ENCODE measurements at regions of chr10 and their contacts with region 1.

Region 1: GRCh38 chr10:26890956-26891355 is 30.2 kb upstream of the ABI1 start:
- DNase-seq: peak; percentile 66
- H3K4me3 Mint-ChIP-seq: no peak overlapping the region
- H3K27ac Mint-ChIP-seq: no peak overlapping the region
- H3K4me1 Mint-ChIP-seq: no peaks in the 10 kb centered on the region
- H3K27me3 Mint-ChIP-seq: peaks cover 6% of the 10 kb centered on the region

Region 2: DNA sequence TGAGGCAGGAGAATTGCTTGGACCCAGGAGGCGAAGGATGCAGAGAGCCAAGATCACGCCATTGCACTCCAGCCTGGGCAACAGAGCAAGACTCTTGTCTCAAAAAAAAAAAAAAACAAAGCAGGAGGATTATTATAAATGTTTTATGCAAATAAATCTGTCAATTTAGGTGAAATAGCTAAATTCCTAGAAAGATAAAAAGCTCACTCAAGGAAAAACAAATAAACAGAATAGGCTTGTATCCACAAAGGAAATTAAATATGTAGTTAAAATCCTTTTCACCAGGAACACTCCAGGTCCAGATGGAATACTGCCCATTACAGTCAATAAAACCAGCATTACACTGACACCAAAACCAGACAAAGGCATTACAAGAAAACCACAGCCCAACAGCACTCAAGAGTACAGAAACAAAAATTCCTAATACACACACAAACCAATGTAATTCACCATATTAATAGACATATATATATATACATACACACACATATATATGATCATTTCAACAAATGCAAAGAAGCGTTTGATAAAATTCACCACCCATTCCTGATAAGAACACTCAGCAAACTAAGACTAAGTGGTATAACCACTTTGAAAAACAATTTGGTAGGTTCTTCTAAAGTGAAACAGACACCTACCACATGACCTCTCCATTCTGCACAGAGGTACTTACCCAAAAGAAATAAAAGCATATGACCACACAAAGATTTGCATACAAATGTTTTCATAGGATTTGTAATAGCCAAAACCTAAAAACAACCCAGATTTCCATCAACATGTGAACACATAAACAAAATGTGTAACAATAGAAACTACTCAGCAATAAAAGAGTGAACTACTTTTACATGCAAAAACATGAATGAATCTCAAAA is 69.0 kb before region 1 on chr10:
- CTCF ChIA-PET with region 1: no interaction called
- POLR2A ChIA-PET with region 1: no interaction called
- intact Hi-C with region 1: no loop called
- DNase-seq: no peak
- H3K4me3 Mint-ChIP-seq: no peak overlapping the region
- H3K27ac Mint-ChIP-seq: peak overlapping the region; percentile 53
- H3K4me1 Mint-ChIP-seq: peaks cover 59% of the 10 kb centered on the region
- H3K27me3 Mint-ChIP-seq: no peaks in the 10 kb centered on the region

Region 3: GRCh38 chr10:26914898-26915297 is 23.9 kb after region 1 on chr10:
- CTCF ChIA-PET with region 1: no interaction called
- POLR2A ChIA-PET with region 1: no interaction called
- intact Hi-C with region 1: no loop called
- DNase-seq: no peak
- H3K4me3 Mint-ChIP-seq: no peak overlapping the region
- H3K27ac Mint-ChIP-seq: no peak overlapping the region
- H3K4me1 Mint-ChIP-seq: no peaks in the 10 kb centered on the region
- H3K27me3 Mint-ChIP-seq: no peaks in the 10 kb centered on the region

Region 4: GRCh38 chr10:27285108-27285507 is 394.2 kb after region 1 on chr10:
- CTCF ChIA-PET with region 1: no interaction called
- POLR2A ChIA-PET with region 1: no interaction called
- intact Hi-C with region 1: loop called (anchors 1 kb)
- DNase-seq: peak; percentile 70
- H3K4me3 Mint-ChIP-seq: no peak overlapping the region
- H3K27ac Mint-ChIP-seq: no peak overlapping the region
- H3K4me1 Mint-ChIP-seq: peaks cover 6% of the 10 kb centered on the region
- H3K27me3 Mint-ChIP-seq: no peaks in the 10 kb centered on the region